Posterior vena cava (tissue), 2 donors: ENCODE measurements at regions of chrX and their contacts with region 1.

Region 1: DNA sequence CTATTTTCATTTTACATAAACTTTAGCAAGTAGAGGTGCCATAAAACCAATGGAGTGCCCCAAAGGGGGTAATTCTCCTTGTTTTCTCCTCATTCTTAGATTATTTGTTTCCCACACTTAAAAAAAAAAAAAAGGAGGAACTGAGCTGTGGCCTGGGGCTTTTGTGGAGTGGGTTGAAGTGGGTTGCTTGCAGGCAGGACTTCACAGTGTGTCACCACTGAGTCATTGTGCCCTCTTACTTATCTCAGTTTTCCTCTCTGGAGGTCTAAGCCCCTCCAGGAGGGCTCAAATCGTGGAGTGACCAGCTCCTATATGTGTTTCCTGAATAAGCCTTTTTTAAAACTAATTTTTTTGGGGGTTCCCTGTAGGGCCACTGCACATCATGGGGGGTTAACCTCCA is 69.0 kb downstream of the SLC16A2 start:
- DNase-seq: no peak

Region 2: DNA sequence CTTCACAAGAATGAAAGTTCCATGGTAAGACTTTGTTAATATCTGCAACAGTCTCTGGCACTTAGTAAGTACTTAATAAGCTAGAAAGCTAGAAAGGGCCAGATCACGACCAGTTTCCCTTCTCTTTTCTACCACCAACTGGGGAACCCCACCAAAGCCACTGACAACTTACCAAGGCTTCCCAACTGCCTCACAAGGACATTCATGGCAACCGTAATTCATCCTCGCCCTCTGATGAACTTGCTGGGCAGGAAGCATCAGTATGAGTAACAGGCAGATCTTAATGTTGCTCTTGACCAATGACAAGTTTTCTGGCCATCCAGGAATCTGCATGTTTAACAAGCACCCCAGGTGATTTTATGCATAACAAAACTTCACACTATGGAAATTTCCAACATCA is 209.5 kb before region 1 on chrX:
- intact Hi-C with region 1: no loop called
- DNase-seq: no peak

Region 3: DNA sequence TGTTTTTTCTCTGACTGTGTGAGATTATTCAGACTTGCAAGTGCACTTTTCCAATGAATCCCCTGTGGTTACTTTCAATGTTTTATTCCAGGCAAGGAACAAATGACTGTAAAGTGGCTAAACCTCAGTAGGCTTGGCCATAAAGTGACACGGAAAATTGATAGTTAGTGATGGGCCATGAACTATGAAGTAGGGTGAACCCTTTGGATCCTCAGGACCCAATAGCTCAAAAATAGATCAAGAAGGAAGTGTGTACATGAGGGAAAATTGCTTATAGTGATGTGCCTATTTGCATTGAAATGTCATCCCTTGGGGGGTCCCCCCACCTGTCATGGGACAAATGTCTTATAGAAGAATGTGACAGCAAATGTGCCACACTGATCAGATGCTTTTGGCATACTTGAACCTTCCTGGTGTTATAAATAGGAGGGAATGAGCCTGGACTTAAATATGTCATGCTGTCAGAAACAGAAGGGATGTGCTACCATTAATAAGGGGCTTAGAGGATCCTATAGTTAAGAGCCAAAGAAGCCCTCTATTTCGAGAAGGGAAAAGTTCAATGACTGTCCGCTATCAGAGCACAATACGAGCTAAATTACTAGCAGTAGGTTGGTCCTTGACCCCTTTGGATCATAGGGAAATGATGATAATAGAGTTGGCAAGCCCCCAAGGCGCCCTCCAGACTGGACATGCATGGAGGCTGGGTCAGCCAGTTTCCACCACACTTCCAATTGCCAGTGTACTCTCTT is 38.6 kb before region 1 on chrX:
- intact Hi-C with region 1: loop called in 1 of 2 experiments (anchors 1 kb)
- DNase-seq: no peak

Region 4: DNA sequence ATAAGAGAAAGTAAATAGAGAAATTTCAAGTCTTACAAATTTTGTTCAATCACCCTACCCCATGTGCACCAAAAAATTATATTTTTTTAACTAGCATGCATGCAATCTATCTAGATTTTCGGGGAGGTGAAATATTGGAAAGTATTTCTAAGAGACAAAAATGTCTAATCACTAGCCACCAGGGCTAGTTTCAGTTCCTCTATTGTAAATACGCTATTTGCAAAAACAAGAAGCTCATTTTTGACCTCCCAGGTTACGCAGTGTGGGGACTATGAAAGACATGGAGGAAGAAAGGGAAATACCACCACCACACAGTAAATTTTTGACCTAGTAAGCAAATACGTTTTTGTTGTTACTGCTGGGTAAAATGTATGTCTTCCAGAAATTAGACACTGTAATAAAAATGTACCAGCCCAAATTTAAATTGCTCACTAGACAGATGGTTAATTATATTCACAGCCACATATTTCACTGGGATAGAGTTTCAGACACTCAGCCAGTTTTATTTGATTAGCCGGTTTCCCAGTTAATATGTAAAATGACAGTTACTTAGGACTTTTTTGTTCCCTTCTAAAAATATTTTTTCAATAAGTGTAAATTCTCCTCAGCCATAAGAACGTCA is 432.8 kb after region 1 on chrX:
- intact Hi-C with region 1: no loop called
- DNase-seq: no peak